Heart right ventricle (tissue), 16 donors: ENCODE measurements at regions of chr19 and their contacts with region 1.

Region 1: GRCh38 chr19:37370880-37371661 is at the start of gene ZNF527:
- DNase-seq: peak; percentile 98
- ATAC-seq: peak; percentile 98 to 100 (median 99)
- H3K4me3 ChIP-seq: peak within 1 kb of the TSS; percentile 45 to 83 (median 66)
- H3K27ac ChIP-seq: peak within 1 kb of the TSS; percentile 63 to 92 (median 83)
- H3K4me1 ChIP-seq: peaks cover 0 to 20% (median 11%) of the 10 kb centered on the region in 9 donors
- H3K27me3 ChIP-seq: no peaks in the 10 kb centered on the region
- CTCF ChIP-seq: peak in 3 of 9 donors; percentile 10 to 33 (median 29)
- total RNA-seq, gene ZNF527: 3.6 to 7.9 (median 6.1) TPM

Region 2: DNA sequence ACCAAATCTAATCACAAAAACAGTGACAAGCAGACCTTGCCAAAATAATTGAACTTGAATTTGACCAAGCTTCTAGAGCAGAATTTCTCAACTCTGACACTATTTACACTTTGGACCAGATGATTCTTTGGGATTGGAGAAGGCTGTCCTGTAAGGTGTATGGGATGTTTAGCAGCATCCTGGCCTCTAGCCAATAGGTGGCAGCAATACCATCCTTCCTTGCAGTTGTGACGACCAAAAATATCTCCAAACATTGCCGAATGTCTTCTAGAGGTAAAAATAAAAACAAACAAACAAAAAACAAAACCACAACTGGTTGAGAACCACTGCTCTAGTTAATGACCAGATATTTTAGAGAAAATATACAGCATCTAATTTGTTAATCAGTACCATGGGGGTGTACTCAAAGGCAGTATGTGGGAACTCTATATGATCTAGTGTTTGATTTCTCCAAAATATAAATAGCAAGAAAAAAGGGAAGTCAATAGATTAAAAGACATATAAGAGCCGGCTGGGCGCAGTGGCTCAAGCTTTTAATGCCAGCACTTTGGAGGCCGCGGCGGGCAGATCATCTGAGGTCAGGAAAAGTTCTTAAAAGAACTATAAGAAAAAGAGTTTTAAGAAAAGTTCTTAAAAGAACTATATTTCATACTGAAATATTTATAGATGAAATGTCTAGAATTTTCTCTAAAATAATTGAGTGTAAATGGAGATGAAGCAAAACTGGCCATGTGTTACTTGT is 61.1 kb before region 1 on chr19:
- intact Hi-C with region 1: loop called in 1 of 10 experiments (anchors 10 kb)
- DNase-seq: no peak
- ATAC-seq: no peak
- H3K4me3 ChIP-seq: no peak overlapping the region
- H3K27ac ChIP-seq: no peak overlapping the region
- H3K4me1 ChIP-seq: peaks cover 0 to 11% (median 5%) of the 10 kb centered on the region in 9 donors
- H3K27me3 ChIP-seq: no peaks in the 10 kb centered on the region
- CTCF ChIP-seq: peak in 1 of 9 donors; percentile 11

Region 3: DNA sequence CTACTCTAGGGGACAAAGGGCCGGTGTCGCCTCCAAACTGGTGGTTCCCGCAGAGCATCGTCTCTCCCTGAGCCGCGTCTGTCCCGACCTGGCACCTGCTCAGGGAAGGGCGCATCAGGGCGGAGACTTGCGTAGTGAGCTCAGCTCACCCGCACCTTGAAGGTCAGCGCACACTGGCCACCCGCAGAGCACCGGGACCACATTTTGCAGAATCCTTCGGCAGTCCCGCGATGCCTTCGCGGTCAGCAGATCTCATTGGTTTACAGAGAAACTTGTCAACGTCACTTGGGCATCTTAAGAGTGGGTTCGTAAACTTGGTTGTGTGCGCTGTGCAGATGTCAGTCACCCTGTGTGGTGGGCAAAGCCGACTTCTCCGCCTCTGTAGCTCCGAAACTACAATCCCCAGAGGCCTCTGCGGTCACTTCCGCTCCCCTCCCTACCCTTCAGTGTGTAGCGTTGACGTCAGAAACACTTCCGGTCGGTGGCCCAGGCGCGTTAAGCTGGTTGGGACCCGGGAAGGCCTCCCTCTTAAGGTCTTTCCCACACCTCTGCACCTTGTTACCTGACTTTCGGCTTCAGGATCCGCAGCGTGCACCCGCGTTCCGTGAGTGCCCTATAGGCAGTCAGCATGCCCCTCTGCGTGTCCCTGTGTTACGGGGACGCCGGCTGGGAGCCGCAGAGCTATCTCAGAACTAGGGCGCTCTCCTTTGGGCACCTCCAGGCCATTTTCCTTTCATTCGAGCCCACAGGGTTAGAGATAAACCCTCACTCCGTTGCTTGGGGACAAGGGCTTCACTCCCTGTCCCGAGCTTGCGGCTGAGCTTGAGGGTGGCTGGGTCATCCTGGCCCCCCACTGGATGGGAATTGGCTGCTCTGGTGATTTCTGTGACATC is 36.6 kb before region 1 on chr19:
- intact Hi-C with region 1: loop called in 3 of 10 experiments (anchors 1 to 5 kb)
- DNase-seq: peak; percentile 90 to 95
- ATAC-seq: peak; percentile 97 to 99 (median 99)
- H3K4me3 ChIP-seq: peak overlapping the region; percentile 58 to 98 (median 78)
- H3K27ac ChIP-seq: peak overlapping the region; percentile 5 to 94 (median 88)
- H3K4me1 ChIP-seq: peaks cover 2 to 51% (median 27%) of the 10 kb centered on the region in 9 donors
- H3K27me3 ChIP-seq: no peaks in the 10 kb centered on the region
- CTCF ChIP-seq: no peak

Region 4: DNA sequence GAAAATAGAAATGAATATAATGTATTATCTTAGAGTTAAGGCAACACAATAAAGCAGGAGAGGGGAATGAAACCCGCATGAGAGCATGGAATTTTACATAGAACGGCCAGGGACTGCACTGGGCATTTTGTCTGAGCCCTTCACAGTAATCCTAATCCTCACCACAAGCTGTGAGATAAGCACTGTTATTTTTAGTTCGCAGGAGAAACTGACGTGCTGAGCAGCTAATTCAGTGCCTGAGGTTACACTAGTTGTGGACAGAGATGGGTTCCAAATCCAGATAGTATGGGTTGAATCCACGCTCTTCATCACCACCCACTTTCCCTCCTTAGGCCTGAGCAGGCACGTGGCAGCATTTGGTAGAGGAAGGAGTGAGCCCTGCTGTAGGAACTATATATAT is 25.0 kb before region 1 on chr19:
- intact Hi-C with region 1: no loop called
- DNase-seq: no peak
- ATAC-seq: peak in 7 of 8 donors; percentile 42 to 84 (median 66)
- H3K4me3 ChIP-seq: no peak overlapping the region
- H3K27ac ChIP-seq: peak overlapping the region in 7 of 10 donors; percentile 0 to 69 (median 48)
- H3K4me1 ChIP-seq: peaks cover 0 to 31% (median 5%) of the 10 kb centered on the region in 9 donors
- H3K27me3 ChIP-seq: no peaks in the 10 kb centered on the region
- CTCF ChIP-seq: no peak

Region 5: GRCh38 chr19:37506387-37507166 is 135.5 kb after region 1 on chr19 and contains the start of gene ZNF793:
- intact Hi-C with region 1: loop called in 1 of 10 experiments (anchors 2 kb)
- DNase-seq: peak; percentile 84 to 88
- ATAC-seq: peak; percentile 91 to 96 (median 94)
- H3K4me3 ChIP-seq: peak within 1 kb of the TSS; percentile 61 to 97 (median 73)
- H3K27ac ChIP-seq: peak within 1 kb of the TSS; percentile 90 to 98 (median 94)
- H3K4me1 ChIP-seq: peaks cover 0 to 22% (median 14%) of the 10 kb centered on the region in 9 donors
- H3K27me3 ChIP-seq: no peaks in the 10 kb centered on the region
- CTCF ChIP-seq: no peak
- total RNA-seq, gene ZNF793: 4.7 to 9.6 (median 6.9) TPM